Heart left ventricle (tissue), 16 donors: ENCODE measurements at regions of chr3 and their contacts with region 1.

Region 1: DNA sequence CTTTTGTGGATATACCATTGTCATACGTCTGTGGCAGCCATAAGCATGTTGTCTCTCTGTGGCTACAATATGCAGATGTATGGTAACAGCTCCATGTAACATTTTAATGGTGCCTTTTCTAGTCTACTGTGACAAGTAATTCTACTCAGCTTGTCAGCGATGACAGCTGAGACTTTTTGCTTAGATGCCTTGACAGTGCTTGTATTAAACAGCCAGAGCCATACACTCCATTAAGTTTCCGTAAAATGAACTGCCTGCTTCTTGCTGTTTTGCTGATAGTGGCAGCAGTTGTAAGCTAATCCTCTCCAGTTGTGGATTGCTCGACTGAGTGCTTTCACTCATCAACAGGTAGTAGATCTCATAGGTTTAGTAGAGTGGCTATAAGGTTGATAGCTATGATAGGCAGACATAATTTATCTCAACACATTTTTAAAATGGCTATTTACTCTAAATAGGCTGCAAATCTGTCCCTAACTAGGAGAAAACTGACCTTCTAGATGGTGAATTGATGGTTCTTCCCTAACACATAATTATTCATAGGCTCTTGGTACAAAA is 260.2 kb upstream of the NAALADL2 start:
- DNase-seq: no peak
- ATAC-seq: no peak
- H3K4me3 ChIP-seq: no peak overlapping the region
- H3K27ac ChIP-seq: no peak overlapping the region
- H3K4me1 ChIP-seq: no peaks in the 10 kb centered on the region
- H3K27me3 ChIP-seq: no peaks in the 10 kb centered on the region
- CTCF ChIP-seq: no peak
- POLR2A ChIP-seq: no peak

Region 2: DNA sequence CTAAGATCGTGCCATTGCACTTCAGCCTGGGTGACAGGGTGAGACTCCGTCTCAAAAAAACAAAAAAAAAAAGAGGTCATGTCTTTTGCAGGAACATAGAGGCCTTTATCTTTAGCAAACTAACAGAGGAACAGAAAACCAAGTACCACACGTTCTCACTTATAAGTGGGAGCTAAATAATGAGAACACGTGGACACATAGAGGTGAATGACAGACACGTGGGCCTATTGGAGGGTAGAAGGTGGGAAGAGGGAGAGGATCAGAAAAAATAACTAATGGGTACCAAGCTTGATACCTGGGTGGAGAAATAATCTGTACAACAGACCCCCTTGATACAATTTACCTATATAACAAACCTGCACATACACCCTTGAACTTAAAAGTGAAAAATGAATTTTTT is 141.2 kb before region 1 on chr3:
- intact Hi-C with region 1: loop called in 1 of 10 experiments (anchors 5 kb)
- DNase-seq: no peak
- ATAC-seq: no peak
- H3K4me3 ChIP-seq: no peak overlapping the region
- H3K27ac ChIP-seq: no peak overlapping the region
- H3K4me1 ChIP-seq: no peaks in the 10 kb centered on the region
- H3K27me3 ChIP-seq: no peaks in the 10 kb centered on the region
- CTCF ChIP-seq: no peak
- POLR2A ChIP-seq: no peak

Region 3: DNA sequence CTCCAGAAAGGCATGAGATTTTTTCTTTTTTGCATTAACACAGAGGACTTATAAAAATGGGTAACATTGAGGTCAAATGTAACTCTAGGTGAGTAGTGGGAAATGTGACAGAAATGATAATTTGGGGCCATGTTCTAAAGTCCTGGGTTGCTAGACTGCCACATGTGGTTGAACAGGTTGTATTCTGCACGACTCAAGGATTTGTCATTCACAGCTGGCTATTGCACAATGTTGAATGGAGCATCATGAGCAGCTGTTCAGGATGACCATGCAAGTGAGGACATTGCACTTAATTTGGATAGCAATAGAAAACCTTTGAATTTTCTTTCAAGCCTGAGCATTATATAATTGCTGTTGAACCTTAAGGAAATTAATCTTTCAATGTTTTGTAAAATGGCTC is 656.7 kb after region 1 on chr3:
- intact Hi-C with region 1: no loop called
- DNase-seq: peak in 2 of 5 donors; percentile 6 to 31
- ATAC-seq: peak; percentile 52 to 93 (median 76)
- H3K4me3 ChIP-seq: no peak overlapping the region
- H3K27ac ChIP-seq: no peak overlapping the region
- H3K4me1 ChIP-seq: peaks cover 0 to 4% (median 0%) of the 10 kb centered on the region in 12 donors
- H3K27me3 ChIP-seq: no peaks in the 10 kb centered on the region
- CTCF ChIP-seq: no peak
- POLR2A ChIP-seq: no peak